Vagina (tissue), 2 donors: ENCODE measurements at regions of chr6 and their contacts with region 1.

Region 1: DNA sequence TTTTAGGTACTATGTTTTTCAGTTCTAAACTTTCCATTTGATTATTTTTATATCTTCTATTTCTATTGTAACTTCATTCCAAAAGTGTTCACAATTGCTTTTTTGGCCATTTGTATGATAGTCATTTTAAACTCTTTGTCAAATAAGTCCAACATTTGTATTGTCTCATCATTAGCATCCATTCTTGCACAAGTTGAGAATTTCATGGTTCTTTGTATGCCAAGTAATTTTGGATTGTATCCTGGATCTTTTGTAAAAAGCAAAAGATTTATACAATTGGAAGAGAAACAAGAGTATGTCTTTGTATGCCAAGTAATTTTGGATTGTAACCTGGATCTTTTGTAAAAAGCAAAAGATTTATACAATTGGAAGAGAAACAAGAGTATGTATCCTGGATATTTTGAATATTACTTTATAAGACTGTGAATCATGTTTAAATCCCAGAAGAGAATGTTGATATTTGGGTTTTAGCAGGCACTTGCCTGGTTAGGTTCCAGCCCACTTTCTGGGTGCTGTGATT is 36.9 kb upstream of the NT5E start:
- DNase-seq: no peak
- H3K4me3 ChIP-seq: no peak overlapping the region
- H3K27ac ChIP-seq: no peak overlapping the region
- H3K4me1 ChIP-seq: peaks cover 11% of the 10 kb centered on the region
- H3K27me3 ChIP-seq: no peaks in the 10 kb centered on the region
- CTCF ChIP-seq: no peak
- POLR2A ChIP-seq: no peak

Region 2: GRCh38 chr6:85476532-85476931 is 63.6 kb after region 1 on chr6:
- intact Hi-C with region 1: loop called (anchors 2 kb)
- DNase-seq: peak in 1 of 2 donors; percentile 13
- H3K4me3 ChIP-seq: no peak overlapping the region
- H3K27ac ChIP-seq: no peak overlapping the region
- H3K4me1 ChIP-seq: no peaks in the 10 kb centered on the region
- H3K27me3 ChIP-seq: no peaks in the 10 kb centered on the region
- CTCF ChIP-seq: no peak
- POLR2A ChIP-seq: no peak